ENCODE measurements at regions of chr10 and their contacts with region 1.

Region 1: DNA sequence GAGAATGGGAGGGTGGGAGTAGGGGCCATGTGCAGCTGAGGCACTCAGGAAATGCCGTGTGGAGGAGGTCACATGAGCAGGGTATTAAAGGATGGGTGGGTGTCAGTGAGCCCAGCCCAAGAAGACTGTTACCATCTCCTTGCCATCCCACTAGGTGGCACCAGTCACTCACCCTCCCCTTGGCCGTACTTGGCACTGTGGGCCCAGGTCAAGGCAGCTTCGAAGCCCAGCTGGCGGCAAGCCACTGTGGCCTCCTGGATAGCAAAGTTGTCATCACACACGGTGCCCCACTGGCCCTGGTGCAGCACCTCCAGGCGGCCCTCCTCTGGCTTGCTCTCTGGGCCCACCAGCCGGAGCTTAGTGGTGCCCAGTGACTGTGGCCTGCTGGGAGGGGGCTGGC is 5.4 kb downstream of the LOXL4 start:
- DNase-seq: no peak
- H3K4me3 ChIP-seq: no peak overlapping the region
- H3K27ac ChIP-seq: peak overlapping the region in 1 of 2 donors; percentile 10
- H3K4me1 ChIP-seq: peaks cover 0 to 18% of the 10 kb centered on the region in 2 donors
- H3K27me3 ChIP-seq: no peaks in the 10 kb centered on the region
- CTCF ChIP-seq: peak; percentile 17 to 52 (median 46)

Region 2: GRCh38 chr10:98414932-98415730 is 152.6 kb after region 1 on chr10 and contains the start of gene PYROXD2:
- intact Hi-C with region 1: loop called (anchors 5 kb)
- DNase-seq: peak; percentile 61 to 95
- H3K4me3 ChIP-seq: peak within 1 kb of the TSS; percentile 59 to 84
- H3K27ac ChIP-seq: peak within 1 kb of the TSS; percentile 69 to 72
- H3K4me1 ChIP-seq: peaks cover 3 to 7% of the 10 kb centered on the region in 2 donors
- H3K27me3 ChIP-seq: no peaks in the 10 kb centered on the region
- CTCF ChIP-seq: peak in 1 of 3 experiments; percentile 2
- total RNA-seq, gene PYROXD2: 5.6 TPM